ENCODE measurements at regions of chr6 and their contacts with region 1.

Region 1: DNA sequence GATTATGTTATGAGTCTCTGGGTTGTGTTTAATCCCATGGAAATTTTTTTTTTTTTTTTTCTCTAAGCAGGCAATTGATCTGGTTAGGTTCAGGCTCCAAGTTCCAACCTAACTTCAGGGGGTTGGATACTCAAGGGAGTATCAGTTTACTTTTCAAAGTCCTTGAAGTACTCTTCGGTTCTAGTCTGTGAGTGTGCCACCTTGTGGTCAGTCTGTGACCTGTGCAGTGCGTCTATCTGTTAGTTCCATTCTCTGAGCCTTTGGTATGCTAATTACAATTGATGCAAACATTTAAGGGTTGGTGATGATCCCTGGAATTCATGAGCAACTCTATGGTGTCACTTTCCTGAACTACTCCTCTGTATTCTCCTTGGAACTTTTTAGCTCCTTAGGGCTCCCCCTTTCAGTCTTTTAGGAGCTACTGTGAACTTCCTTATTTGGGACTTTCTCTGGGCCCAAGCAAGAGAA is 342.0 kb downstream of the SOX4 start:
- DNase-seq: peak; percentile 38
- H3K4me3 Mint-ChIP-seq: no peak overlapping the region
- H3K27ac Mint-ChIP-seq: no peak overlapping the region
- H3K4me1 Mint-ChIP-seq: no peaks in the 10 kb centered on the region
- H3K27me3 Mint-ChIP-seq: no peaks in the 10 kb centered on the region

Region 2: GRCh38 chr6:20564269-20564668 is 1371.3 kb before region 1 on chr6:
- CTCF ChIA-PET with region 1: no interaction called
- intact Hi-C with region 1: loop called (anchors 10 kb)
- DNase-seq: no peak
- H3K4me3 Mint-ChIP-seq: no peak overlapping the region
- H3K27ac Mint-ChIP-seq: no peak overlapping the region
- H3K4me1 Mint-ChIP-seq: peaks cover 11% of the 10 kb centered on the region
- H3K27me3 Mint-ChIP-seq: no peaks in the 10 kb centered on the region

Region 3: GRCh38 chr6:21922086-21922485 is 13.5 kb before region 1 on chr6:
- CTCF ChIA-PET with region 1: no interaction called
- intact Hi-C with region 1: no loop called
- DNase-seq: no peak
- H3K4me3 Mint-ChIP-seq: no peak overlapping the region
- H3K27ac Mint-ChIP-seq: no peak overlapping the region
- H3K4me1 Mint-ChIP-seq: peaks cover 4% of the 10 kb centered on the region
- H3K27me3 Mint-ChIP-seq: no peaks in the 10 kb centered on the region

Region 4: DNA sequence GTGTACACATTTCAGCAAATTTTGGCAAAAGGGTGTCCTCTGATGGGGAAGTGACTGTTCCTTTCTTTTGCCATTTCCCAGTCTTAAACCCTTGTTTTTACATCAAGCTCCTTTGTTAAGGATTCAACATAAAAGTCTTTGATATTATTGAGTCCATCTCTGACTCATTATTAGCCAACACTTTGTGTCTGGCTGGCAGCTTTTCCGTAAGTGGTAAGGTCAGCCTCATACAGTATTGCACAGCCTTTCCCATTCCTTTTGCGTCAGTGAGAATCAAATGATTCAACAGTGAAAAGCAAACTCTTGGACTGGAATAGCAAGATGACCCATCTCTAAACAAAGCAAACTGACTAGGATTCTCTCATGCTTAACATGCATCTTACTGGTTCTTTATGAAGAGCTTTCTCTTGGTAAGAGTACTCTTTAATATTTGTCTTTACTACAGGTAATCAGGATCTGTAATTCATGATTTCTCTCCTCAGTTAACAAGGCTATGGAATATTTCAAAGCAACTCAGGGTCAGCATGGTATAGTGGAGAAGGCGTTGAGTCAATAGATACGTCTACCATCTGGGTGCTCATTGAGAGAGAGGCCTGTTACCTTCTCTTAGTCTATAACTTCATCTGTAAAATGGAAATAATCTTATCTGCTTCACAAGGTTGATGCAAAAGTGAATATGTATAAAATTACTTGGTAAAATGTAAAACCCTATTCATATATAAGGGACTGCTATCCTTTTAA is 177.6 kb after region 1 on chr6:
- CTCF ChIA-PET with region 1: no interaction called
- intact Hi-C with region 1: no loop called
- DNase-seq: no peak
- H3K4me3 Mint-ChIP-seq: no peak overlapping the region
- H3K27ac Mint-ChIP-seq: no peak overlapping the region
- H3K4me1 Mint-ChIP-seq: no peaks in the 10 kb centered on the region
- H3K27me3 Mint-ChIP-seq: no peaks in the 10 kb centered on the region